CD8-positive, alpha-beta T cell (primary cell): ENCODE measurements at regions of chr6 and their contacts with region 1.

Region 1: DNA sequence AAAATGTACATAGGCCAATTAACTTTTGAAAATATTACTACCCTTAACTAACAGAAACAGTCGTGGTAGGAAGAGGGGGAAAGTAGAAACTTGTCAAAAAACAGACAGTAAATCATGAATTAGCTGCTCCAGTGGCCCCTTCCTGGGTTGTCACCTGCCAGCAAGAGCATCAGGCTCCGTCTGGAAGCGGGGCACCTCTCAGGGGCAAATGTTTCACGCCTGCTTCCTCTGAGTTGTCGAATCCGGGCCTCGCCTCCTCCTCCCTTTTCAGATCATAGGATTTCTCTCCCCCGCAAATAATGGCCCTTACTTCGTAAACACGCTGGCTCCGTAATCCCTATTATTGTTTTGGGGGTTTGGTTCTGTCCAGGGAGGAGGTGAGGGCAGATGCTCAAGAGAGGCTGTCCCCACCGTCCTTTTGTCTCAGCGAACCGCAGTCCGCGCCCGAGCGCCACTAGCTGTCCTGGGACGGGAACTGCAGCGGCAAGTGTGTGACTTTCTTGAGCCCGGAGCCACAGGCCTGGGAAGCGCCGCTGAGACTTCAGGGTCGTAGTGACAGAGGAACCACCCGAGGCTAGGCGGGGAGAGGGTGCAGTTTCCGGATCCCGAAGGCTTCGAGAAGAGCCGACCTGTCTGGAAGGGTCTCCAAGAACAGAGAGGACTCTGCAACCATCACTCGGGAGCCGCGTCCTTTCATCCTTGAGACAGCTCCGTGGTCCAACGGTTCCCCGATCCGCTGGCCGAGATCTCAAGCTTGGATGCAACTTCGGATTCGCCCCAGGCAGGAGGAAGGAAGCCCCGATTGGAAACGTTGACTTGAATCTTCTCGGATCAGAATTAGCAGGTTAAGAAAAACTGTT is 214.5 kb upstream of the ZNF184 start:
- DNase-seq: peak; percentile 58 to 88 (median 74)
- ATAC-seq: peak; percentile 72
- H3K4me3 ChIP-seq: peak overlapping the region; percentile 60 to 74
- H3K4me3 Mint-ChIP-seq: peak overlapping the region; percentile 94
- H3K27ac ChIP-seq: peak overlapping the region; percentile 15 to 55
- H3K27ac Mint-ChIP-seq: peak overlapping the region; percentile 93
- H3K4me1 ChIP-seq: peaks cover 3% of the 10 kb centered on the region
- H3K4me1 Mint-ChIP-seq: peaks cover 18% of the 10 kb centered on the region
- H3K27me3 ChIP-seq: no peaks in the 10 kb centered on the region
- H3K27me3 Mint-ChIP-seq: peaks cover 6% of the 10 kb centered on the region
- CTCF ChIP-seq: peak; percentile 67

Region 2: GRCh38 chr6:26312501-26313390 is 1374.6 kb before region 1 on chr6:
- CTCF ChIA-PET with region 1: no interaction called
- POLR2A ChIA-PET with region 1: no interaction called
- intact Hi-C with region 1: loop called in 1 of 2 experiments (anchors 5 kb)
- DNase-seq: peak; percentile 74 to 92 (median 87)
- ATAC-seq: peak; percentile 51
- H3K4me3 ChIP-seq: peak overlapping the region; percentile 70 to 76
- H3K4me3 Mint-ChIP-seq: peak overlapping the region; percentile 89
- H3K27ac ChIP-seq: peak overlapping the region; percentile 38 to 49
- H3K27ac Mint-ChIP-seq: peak overlapping the region; percentile 93
- H3K4me1 ChIP-seq: no peaks in the 10 kb centered on the region
- H3K4me1 Mint-ChIP-seq: peaks cover 41% of the 10 kb centered on the region
- H3K27me3 ChIP-seq: no peaks in the 10 kb centered on the region
- H3K27me3 Mint-ChIP-seq: no peaks in the 10 kb centered on the region
- CTCF ChIP-seq: no peak

Region 3: GRCh38 chr6:27177485-27178406 is 509.6 kb before region 1 on chr6:
- CTCF ChIA-PET with region 1: interaction called, 4 read pairs
- POLR2A ChIA-PET with region 1: no interaction called
- intact Hi-C with region 1: loop called (anchors 2 to 5 kb)
- DNase-seq: peak; percentile 46 to 89 (median 72)
- ATAC-seq: peak; percentile 69
- H3K4me3 ChIP-seq: peak overlapping the region; percentile 95 to 100
- H3K4me3 Mint-ChIP-seq: peak overlapping the region; percentile 93
- H3K27ac ChIP-seq: peak overlapping the region; percentile 48 to 68
- H3K27ac Mint-ChIP-seq: peak overlapping the region; percentile 91
- H3K4me1 ChIP-seq: no peaks in the 10 kb centered on the region
- H3K4me1 Mint-ChIP-seq: peaks cover 17% of the 10 kb centered on the region
- H3K27me3 ChIP-seq: no peaks in the 10 kb centered on the region
- H3K27me3 Mint-ChIP-seq: peaks cover 3% of the 10 kb centered on the region
- CTCF ChIP-seq: peak; percentile 11

Region 4: GRCh38 chr6:27479319-27480182 is 207.8 kb before region 1 on chr6:
- CTCF ChIA-PET with region 1: interaction called, 4 read pairs
- POLR2A ChIA-PET with region 1: interaction called, 12 read pairs
- intact Hi-C with region 1: loop called (anchors 2 kb)
- DNase-seq: peak; percentile 83 to 97 (median 87)
- ATAC-seq: peak; percentile 69
- H3K4me3 ChIP-seq: peak overlapping the region; percentile 79 to 96
- H3K4me3 Mint-ChIP-seq: no peak overlapping the region
- H3K27ac ChIP-seq: peak overlapping the region; percentile 96 to 99
- H3K27ac Mint-ChIP-seq: no peak overlapping the region
- H3K4me1 ChIP-seq: peaks cover 13% of the 10 kb centered on the region
- H3K4me1 Mint-ChIP-seq: peaks cover 9% of the 10 kb centered on the region
- H3K27me3 ChIP-seq: no peaks in the 10 kb centered on the region
- H3K27me3 Mint-ChIP-seq: no peaks in the 10 kb centered on the region
- CTCF ChIP-seq: no peak

Region 5: DNA sequence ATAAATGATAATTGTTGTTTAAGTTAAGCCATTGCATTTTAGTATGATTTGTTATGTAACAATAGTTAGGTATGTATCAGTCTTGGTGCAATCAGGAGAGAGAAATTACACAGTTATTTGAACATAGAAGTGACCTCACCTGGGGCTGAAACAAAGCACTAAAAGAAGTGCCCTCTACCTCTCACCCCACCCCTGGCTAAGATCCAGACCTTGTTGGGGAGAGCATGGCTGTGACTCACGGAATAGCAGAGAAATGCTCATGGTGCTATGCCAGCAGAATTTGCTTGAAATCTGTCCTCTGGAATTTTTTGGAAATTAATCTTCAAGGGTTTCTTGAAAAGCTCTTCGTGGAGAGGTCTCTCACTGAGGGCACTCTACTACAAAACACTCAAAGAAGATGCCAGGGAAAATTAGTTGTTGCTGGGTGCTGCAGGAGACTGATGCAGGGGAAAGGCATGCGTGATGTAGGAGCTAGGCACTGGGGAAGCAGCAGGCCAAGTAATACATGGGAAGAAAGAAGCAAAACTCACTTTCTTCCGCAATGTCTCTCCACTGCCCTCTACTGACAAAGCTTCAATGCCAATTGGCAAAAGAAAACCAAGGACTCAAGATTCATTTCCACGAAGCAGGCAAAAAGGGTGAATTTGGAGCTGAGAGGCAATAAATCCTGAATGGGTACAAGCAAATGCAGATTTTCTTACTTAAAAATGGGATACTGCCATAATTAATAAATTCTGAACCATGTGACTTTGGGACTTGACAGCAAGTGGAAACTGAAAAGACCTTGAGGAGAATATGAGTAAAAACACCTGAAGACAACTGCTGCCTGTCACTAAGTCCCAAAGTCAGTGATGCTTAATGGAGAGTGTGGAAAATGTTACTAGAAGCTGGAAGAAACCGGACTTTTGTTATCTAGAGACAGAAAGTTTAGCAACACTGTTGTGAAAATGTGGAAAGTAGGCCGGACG is 78.2 kb before region 1 on chr6:
- CTCF ChIA-PET with region 1: no interaction called
- POLR2A ChIA-PET with region 1: no interaction called
- intact Hi-C with region 1: loop called in 1 of 2 experiments (anchors 5 kb)
- DNase-seq: peak in 2 of 9 experiments; percentile 44 to 58
- ATAC-seq: no peak
- H3K4me3 ChIP-seq: no peak overlapping the region
- H3K4me3 Mint-ChIP-seq: no peak overlapping the region
- H3K27ac ChIP-seq: no peak overlapping the region
- H3K27ac Mint-ChIP-seq: no peak overlapping the region
- H3K4me1 ChIP-seq: no peaks in the 10 kb centered on the region
- H3K4me1 Mint-ChIP-seq: peaks cover 11% of the 10 kb centered on the region
- H3K27me3 ChIP-seq: peaks cover 12 to 18% of the 10 kb centered on the region in 2 experiments
- H3K27me3 Mint-ChIP-seq: peaks cover 47% of the 10 kb centered on the region
- CTCF ChIP-seq: peak; percentile 48

Region 6: GRCh38 chr6:27728442-27728841 is 41.1 kb after region 1 on chr6:
- CTCF ChIA-PET with region 1: no interaction called
- POLR2A ChIA-PET with region 1: no interaction called
- intact Hi-C with region 1: no loop called
- DNase-seq: no peak
- ATAC-seq: no peak
- H3K4me3 ChIP-seq: no peak overlapping the region
- H3K4me3 Mint-ChIP-seq: no peak overlapping the region
- H3K27ac ChIP-seq: no peak overlapping the region
- H3K27ac Mint-ChIP-seq: no peak overlapping the region
- H3K4me1 ChIP-seq: no peaks in the 10 kb centered on the region
- H3K4me1 Mint-ChIP-seq: no peaks in the 10 kb centered on the region
- H3K27me3 ChIP-seq: peaks cover 0 to 2% of the 10 kb centered on the region in 2 experiments
- H3K27me3 Mint-ChIP-seq: peaks cover 46% of the 10 kb centered on the region
- CTCF ChIP-seq: no peak

Region 7: DNA sequence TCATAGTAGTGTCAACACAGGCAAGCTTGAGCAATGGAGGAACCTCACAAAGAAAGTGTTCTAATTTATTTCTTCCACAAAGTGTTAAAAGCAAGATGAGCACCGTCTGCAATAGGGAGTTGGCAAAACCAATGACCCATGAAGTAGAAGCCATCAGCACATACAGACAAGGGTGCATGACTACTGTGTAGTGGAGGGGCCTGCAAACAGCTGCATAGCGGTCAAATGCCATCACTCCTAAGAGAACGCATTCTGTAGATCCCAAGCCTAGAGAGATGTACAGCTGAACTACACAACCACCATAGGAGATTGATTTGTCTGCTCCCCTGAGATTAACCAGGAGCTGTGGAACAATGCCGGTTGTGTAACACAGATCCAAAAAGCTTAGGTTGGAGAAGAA is 366.2 kb after region 1 on chr6:
- CTCF ChIA-PET with region 1: no interaction called
- POLR2A ChIA-PET with region 1: no interaction called
- intact Hi-C with region 1: no loop called
- DNase-seq: no peak
- ATAC-seq: no peak
- H3K4me3 ChIP-seq: no peak overlapping the region
- H3K4me3 Mint-ChIP-seq: no peak overlapping the region
- H3K27ac ChIP-seq: no peak overlapping the region
- H3K27ac Mint-ChIP-seq: no peak overlapping the region
- H3K4me1 ChIP-seq: no peaks in the 10 kb centered on the region
- H3K4me1 Mint-ChIP-seq: no peaks in the 10 kb centered on the region
- H3K27me3 ChIP-seq: peaks cover 0 to under 1% of the 10 kb centered on the region in 2 experiments
- H3K27me3 Mint-ChIP-seq: peaks cover 25% of the 10 kb centered on the region
- CTCF ChIP-seq: no peak

Region 8: GRCh38 chr6:28940858-28941680 is 1253.7 kb after region 1 on chr6:
- CTCF ChIA-PET with region 1: no interaction called
- POLR2A ChIA-PET with region 1: no interaction called
- intact Hi-C with region 1: loop called in 1 of 2 experiments (anchors 5 kb)
- DNase-seq: peak in 8 of 9 experiments; percentile 58 to 92 (median 70)
- ATAC-seq: peak; percentile 70
- H3K4me3 ChIP-seq: peak overlapping the region; percentile 66 to 81
- H3K4me3 Mint-ChIP-seq: peak overlapping the region; percentile 91
- H3K27ac ChIP-seq: peak overlapping the region; percentile 70 to 79
- H3K27ac Mint-ChIP-seq: peak overlapping the region; percentile 96
- H3K4me1 ChIP-seq: peaks cover 40% of the 10 kb centered on the region
- H3K4me1 Mint-ChIP-seq: peaks cover 46% of the 10 kb centered on the region
- H3K27me3 ChIP-seq: no peaks in the 10 kb centered on the region
- H3K27me3 Mint-ChIP-seq: no peaks in the 10 kb centered on the region
- CTCF ChIP-seq: no peak